MCF 10A (cell line): ENCODE measurements at regions of chr7 and their contacts with region 1.

Region 1: GRCh38 chr7:139777948-139778841 is at the start of gene HIPK2:
- DNase-seq: peak; percentile 68
- H3K4me3 Mint-ChIP-seq: peak within 1 kb of the TSS; percentile 96
- H3K27ac Mint-ChIP-seq: peak within 1 kb of the TSS; percentile 98
- H3K4me1 Mint-ChIP-seq: peaks cover 40% of the 10 kb centered on the region
- H3K27me3 Mint-ChIP-seq: no peaks in the 10 kb centered on the region
- CTCF ChIP-seq: no peak
- total RNA-seq, gene HIPK2: 64.3 and 93.9 TPM in 2 replicates

Region 2: DNA sequence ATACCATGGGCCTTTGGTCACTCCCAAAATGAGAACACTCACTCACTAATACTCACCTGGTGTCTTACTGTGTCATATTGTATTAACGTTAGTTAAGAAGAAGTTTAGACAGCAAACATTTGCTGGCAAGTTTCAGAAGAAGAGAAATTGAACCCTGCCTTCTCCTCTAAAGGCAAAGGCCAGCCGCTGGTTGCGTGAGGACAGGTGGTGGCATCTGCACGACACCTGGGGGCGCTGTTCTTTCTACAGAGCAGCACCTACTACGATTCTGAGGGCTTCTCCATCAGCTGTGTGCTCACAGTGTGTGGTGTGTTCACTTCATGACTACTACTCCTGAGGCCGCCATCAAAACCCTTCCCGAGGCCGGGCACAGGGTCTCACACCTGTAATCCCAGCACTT is 272.6 kb before region 1 on chr7:
- CTCF ChIA-PET with region 1: no interaction called
- POLR2A ChIA-PET with region 1: no interaction called
- intact Hi-C with region 1: loop called (anchors 10 kb)
- DNase-seq: peak; percentile 39
- H3K4me3 Mint-ChIP-seq: no peak overlapping the region
- H3K27ac Mint-ChIP-seq: no peak overlapping the region
- H3K4me1 Mint-ChIP-seq: no peaks in the 10 kb centered on the region
- H3K27me3 Mint-ChIP-seq: no peaks in the 10 kb centered on the region
- CTCF ChIP-seq: no peak

Region 3: DNA sequence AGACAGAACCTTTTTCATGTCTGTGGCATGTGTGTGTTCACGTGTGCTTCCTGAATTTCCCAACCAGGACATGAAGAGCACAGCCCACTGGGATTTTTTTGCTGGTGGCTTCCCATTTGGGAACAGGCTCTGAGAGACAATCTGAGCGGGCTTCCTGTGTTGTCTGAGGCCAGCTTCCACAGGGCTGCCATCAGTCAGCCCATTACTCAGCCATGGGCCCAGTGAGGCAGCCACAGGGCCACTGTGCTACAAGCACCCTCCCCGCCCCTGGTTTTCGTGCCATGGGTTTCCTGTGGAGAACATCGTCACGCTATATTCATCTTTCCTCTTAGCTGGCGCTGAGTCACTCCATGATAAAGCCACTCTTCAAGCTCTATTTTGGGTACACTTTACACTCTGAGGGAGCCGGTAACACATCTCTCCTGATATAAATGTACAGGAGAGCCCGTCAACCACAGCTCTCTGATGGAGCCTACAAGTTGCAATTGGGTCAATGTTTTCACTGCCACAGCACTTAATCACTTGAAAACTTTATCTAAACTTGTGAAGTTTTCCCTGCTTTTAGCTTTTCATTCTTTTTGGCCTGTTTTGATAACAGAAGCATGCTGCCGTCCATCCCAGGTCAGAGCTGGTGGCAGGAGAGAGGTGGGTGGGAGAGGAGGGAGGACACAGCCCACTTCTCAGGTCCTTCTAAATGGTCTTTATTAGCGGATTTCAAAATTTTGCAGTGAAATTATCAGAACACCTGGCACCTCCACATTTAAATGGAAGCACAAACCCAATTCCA is 97.3 kb before region 1 on chr7:
- CTCF ChIA-PET with region 1: no interaction called
- POLR2A ChIA-PET with region 1: interaction called, 5 read pairs
- intact Hi-C with region 1: loop called (anchors 2 kb)
- DNase-seq: peak; percentile 95
- H3K4me3 Mint-ChIP-seq: peak overlapping the region; percentile 13
- H3K27ac Mint-ChIP-seq: peak overlapping the region; percentile 94
- H3K4me1 Mint-ChIP-seq: peaks cover 54% of the 10 kb centered on the region
- H3K27me3 Mint-ChIP-seq: no peaks in the 10 kb centered on the region
- CTCF ChIP-seq: no peak

Region 4: GRCh38 chr7:139731802-139732470 is 46.3 kb before region 1 on chr7:
- CTCF ChIA-PET with region 1: interaction called, 5 read pairs
- POLR2A ChIA-PET with region 1: interaction called, 72 read pairs
- intact Hi-C with region 1: no loop called
- DNase-seq: peak; percentile 98
- H3K4me3 Mint-ChIP-seq: peak overlapping the region; percentile 57
- H3K27ac Mint-ChIP-seq: peak overlapping the region; percentile 87
- H3K4me1 Mint-ChIP-seq: peaks cover 73% of the 10 kb centered on the region
- H3K27me3 Mint-ChIP-seq: no peaks in the 10 kb centered on the region
- CTCF ChIP-seq: no peak

Region 5: DNA sequence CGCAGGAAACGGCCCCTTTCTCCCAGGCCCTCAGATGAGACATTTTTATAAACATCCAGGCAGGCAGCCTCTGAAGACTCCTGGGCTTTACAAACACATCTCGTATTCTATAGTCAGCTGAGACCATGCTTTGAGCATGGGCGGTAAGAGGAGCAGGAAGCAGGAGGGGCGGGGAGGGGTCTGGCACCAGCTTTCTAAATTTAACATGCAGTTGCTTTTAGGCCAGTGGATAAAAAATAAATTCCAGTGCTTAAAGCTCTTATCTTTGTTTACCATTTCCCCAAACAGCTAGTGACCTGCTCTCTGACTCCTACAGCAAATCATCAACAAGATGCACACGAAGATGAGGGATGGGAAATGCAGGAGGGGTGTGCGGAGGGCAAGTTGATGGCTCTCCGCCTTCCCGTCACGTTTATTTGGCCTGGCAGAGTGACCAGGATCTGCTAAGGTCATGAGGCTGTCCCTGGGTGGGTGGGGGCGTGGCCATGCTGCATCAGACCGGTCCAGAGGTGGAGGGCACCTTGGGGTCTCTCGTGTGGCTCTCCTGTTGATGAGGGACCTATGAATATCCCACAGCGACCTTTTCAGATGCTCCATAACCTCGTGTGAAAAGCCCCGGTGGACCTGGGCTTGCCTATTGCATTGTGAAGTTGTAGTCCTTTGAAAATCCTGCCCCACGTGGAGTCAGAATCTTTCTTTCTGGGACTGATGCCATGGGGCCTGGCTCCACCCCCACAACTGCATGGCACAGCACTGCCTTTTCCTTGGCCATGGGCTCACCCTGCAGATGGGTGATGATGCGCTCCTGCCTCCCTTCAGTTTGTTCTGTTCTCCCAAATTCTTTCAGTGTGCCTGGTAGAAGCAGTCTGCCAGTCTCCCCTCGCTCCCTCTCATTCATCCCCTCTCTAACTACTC is 217.1 kb after region 1 on chr7:
- CTCF ChIA-PET with region 1: interaction called, 6 read pairs
- POLR2A ChIA-PET with region 1: no interaction called
- intact Hi-C with region 1: loop called (anchors 1 kb)
- DNase-seq: peak; percentile 73
- H3K4me3 Mint-ChIP-seq: no peak overlapping the region
- H3K27ac Mint-ChIP-seq: no peak overlapping the region
- H3K4me1 Mint-ChIP-seq: peaks cover 12% of the 10 kb centered on the region
- H3K27me3 Mint-ChIP-seq: no peaks in the 10 kb centered on the region
- CTCF ChIP-seq: no peak

Region 6: GRCh38 chr7:140126435-140127034 is 348.3 kb after region 1 on chr7:
- CTCF ChIA-PET with region 1: no interaction called
- POLR2A ChIA-PET with region 1: no interaction called
- intact Hi-C with region 1: no loop called
- DNase-seq: no peak
- H3K4me3 Mint-ChIP-seq: no peak overlapping the region
- H3K27ac Mint-ChIP-seq: no peak overlapping the region
- H3K4me1 Mint-ChIP-seq: no peaks in the 10 kb centered on the region
- H3K27me3 Mint-ChIP-seq: no peaks in the 10 kb centered on the region
- CTCF ChIP-seq: no peak